Activated CD4-positive, alpha-beta T cell treated with anti-CD3 and anti-CD28 coated beads, Interleukin-2, amount 10 ng/mL, durations not matched to agents 7 days and 5 days (primary cell): ENCODE measurements at regions of chr12 and their contacts with region 1.

Region 1: DNA sequence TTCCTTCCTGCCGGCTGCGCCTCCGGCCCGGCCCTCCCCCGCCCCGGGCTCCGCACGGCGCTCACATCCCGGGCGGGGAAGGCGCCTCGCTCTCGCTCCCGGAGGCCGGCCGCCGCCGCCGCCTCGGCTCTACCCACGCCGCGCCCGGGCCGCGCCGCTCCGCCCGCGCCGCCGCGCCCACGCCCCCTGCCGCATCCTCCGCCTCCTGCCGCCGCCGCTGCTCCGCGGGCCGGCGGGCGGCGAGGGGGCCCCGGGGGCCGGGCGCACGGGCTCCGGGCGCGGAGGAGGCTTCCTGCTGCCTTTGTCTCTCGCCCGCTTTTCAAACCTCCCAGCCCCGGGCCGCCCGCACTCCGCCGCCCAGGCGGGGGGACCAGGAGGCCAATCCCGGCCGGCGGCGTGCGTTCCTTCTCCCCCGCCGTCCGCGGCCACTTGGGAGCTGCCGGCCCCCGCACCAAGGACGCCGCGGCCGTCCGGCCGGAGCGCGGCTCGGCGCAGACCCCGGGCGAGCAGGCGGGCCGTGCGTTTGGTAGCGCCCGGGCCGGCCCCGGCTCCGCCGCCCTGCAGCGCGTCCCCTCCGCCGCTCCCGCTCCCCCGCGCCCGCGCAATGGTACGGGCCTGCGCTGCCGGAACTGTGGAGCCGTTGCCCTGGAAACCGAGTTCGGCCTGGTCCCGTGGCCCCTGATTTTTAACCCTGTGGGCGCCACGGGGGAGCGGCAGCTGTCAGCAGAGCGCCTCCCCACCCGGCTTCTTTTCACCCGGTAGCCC is at the start of gene FBXL14:
- DNase-seq: peak; percentile 93
- H3K4me3 Mint-ChIP-seq: peak within 1 kb of the TSS; percentile 96
- H3K27ac Mint-ChIP-seq: peak within 1 kb of the TSS; percentile 91
- H3K4me1 Mint-ChIP-seq: peaks cover 43% of the 10 kb centered on the region
- H3K27me3 Mint-ChIP-seq: no peaks in the 10 kb centered on the region
- total RNA-seq, gene FBXL14: 24.3 to 26.4 TPM

Region 2: GRCh38 chr12:1605129-1606020 is 10.9 kb after region 1 on chr12:
- CTCF ChIA-PET with region 1: interaction called, 12 read pairs
- POLR2A ChIA-PET with region 1: interaction called, 3 read pairs
- DNase-seq: peak; percentile 73
- H3K4me3 Mint-ChIP-seq: peak overlapping the region; percentile 56
- H3K27ac Mint-ChIP-seq: peak overlapping the region; percentile 1
- H3K4me1 Mint-ChIP-seq: peaks cover 43% of the 10 kb centered on the region
- H3K27me3 Mint-ChIP-seq: peaks cover 5% of the 10 kb centered on the region

Region 3: GRCh38 chr12:1744932-1745331 is 150.5 kb after region 1 on chr12:
- CTCF ChIA-PET with region 1: no interaction called
- POLR2A ChIA-PET with region 1: no interaction called
- DNase-seq: no peak
- H3K4me3 Mint-ChIP-seq: no peak overlapping the region
- H3K27ac Mint-ChIP-seq: no peak overlapping the region
- H3K4me1 Mint-ChIP-seq: peaks cover 11% of the 10 kb centered on the region
- H3K27me3 Mint-ChIP-seq: no peaks in the 10 kb centered on the region